Ascending aorta (tissue), 2 donors: ENCODE measurements at regions of chr19 and their contacts with region 1.

Region 1: GRCh38 chr19:17245244-17245984 is at the start of gene NR2F6:
- DNase-seq: no peak
- H3K4me3 ChIP-seq: peak within 1 kb of the TSS; percentile 90 to 97
- H3K27ac ChIP-seq: peak within 1 kb of the TSS; percentile 82 to 85
- H3K4me1 ChIP-seq: peaks cover 3 to 32% of the 10 kb centered on the region in 2 donors
- H3K27me3 ChIP-seq: no peaks in the 10 kb centered on the region
- CTCF ChIP-seq: no peak
- total RNA-seq, gene NR2F6: 181 TPM

Region 2: GRCh38 chr19:17075035-17075863 is 170.2 kb before region 1 on chr19 and contains the starts of genes HAUS8 and MYO9B:
- intact Hi-C with region 1: loop called (anchors 2 kb)
- DNase-seq: peak; percentile 96 to 100
- H3K4me3 ChIP-seq: peak within 1 kb of the TSS; percentile 91 to 97
- H3K27ac ChIP-seq: peak within 1 kb of the TSS; percentile 94 to 98
- H3K4me1 ChIP-seq: peaks cover 5 to 29% of the 10 kb centered on the region in 2 donors
- H3K27me3 ChIP-seq: no peaks in the 10 kb centered on the region
- CTCF ChIP-seq: no peak
- total RNA-seq, gene HAUS8: 4.3 TPM
- total RNA-seq, gene MYO9B: 182 TPM

Region 3: DNA sequence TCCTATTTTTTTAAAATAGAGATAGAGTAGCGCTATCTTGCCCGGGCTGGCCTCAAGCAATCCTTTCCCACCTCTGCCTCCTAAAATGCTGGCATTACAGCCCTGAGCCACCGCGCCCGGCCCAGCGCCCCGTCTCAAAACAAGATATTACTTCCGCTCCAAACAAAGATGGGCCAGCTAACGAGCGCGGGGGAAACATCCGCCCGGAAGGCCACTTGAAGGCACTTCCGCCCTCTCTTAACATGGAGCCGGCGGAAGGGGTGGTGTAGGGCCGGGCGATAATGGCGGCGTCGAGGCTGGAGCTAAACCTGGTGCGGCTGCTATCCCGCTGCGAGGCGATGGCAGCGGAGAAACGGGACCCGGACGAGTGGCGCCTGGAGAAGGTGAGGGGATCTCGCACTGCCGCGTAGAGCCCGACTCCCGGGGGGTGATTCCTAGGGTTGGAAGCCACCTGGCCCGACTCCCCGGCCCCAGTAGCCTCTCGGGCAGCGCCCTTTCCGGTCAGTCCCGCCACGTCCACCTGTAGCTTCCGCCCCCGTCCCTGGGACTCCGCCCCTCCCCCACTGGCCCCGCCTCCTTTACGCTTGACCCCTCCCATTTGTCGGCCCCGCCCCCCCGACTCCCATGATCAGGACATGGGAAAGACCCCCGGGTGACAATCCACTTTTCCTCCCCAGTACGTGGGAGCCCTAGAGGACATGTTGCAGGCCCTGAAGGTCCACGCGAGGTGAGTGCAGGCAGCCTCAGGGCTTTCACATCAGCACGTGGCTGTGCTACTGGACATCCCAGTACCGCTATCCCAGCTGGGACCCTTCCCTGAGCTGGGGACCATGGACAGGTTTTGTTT is 30.1 kb before region 1 on chr19 and contains the start of gene USE1:
- intact Hi-C with region 1: loop called (anchors 1 kb)
- DNase-seq: peak; percentile 66 to 96
- H3K4me3 ChIP-seq: peak within 1 kb of the TSS; percentile 72 to 74
- H3K27ac ChIP-seq: peak within 1 kb of the TSS; percentile 84 to 88
- H3K4me1 ChIP-seq: peaks cover 0 to 17% of the 10 kb centered on the region in 2 donors
- H3K27me3 ChIP-seq: no peaks in the 10 kb centered on the region
- CTCF ChIP-seq: no peak
- total RNA-seq, gene USE1: 234 TPM

Region 4: GRCh38 chr19:17226002-17226933 is 19.1 kb before region 1 on chr19 and contains the start of gene OCEL1:
- intact Hi-C with region 1: loop called (anchors 1 kb)
- DNase-seq: peak; percentile 90 to 99
- H3K4me3 ChIP-seq: peak within 1 kb of the TSS; percentile 73 to 80
- H3K27ac ChIP-seq: peak within 1 kb of the TSS; percentile 88 to 92
- H3K4me1 ChIP-seq: peaks cover 0 to 8% of the 10 kb centered on the region in 2 donors
- H3K27me3 ChIP-seq: no peaks in the 10 kb centered on the region
- CTCF ChIP-seq: no peak
- total RNA-seq, gene OCEL1: 13.7 TPM

Region 5: GRCh38 chr19:17266975-17267788 is 21.8 kb after region 1 on chr19 and contains the start of gene BABAM1:
- intact Hi-C with region 1: loop called (anchors 1 kb)
- DNase-seq: peak; percentile 92 to 99
- H3K4me3 ChIP-seq: peak within 1 kb of the TSS; percentile 79 to 96
- H3K27ac ChIP-seq: peak within 1 kb of the TSS; percentile 61 to 83
- H3K4me1 ChIP-seq: peaks cover 5 to 6% of the 10 kb centered on the region in 2 donors
- H3K27me3 ChIP-seq: no peaks in the 10 kb centered on the region
- CTCF ChIP-seq: no peak
- total RNA-seq, gene BABAM1: 85.5 TPM

Region 6: DNA sequence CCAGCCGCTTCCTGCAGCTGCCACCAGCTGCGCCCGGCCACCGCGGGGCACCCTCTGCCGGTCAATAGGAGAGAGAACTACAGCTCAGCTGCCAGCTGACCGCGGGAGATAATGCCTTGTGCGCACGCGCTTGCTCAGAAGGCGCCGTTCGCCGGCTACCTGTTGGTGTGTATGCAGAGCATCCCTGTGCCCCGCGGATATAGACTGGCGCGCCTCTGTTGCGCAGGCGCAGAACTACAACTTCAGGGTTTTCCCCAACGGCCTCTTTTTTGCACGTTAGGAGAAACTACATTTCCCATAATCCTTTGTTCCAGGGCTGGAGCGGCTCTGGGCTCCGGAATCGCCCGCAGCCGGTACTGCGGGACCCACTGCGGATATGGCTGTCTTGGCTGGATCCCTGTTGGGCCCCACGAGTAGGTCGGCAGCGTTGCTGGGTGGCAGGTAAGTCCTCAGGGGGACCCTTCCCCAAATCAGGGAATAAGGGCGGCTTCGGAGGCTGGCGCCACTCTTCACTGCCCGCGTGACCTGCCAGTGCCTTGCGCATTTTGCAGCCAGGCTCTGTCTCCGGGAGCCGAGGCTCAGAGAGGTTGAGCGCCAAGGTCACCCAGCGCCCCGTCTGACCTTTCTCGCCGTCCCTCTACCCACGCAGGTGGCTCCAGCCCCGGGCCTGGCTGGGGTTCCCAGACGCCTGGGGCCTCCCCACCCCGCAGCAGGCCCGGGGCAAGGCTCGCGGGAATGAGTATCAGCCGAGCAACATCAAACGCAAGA is 60.3 kb after region 1 on chr19 and contains the start of gene MRPL34:
- intact Hi-C with region 1: loop called (anchors 5 kb)
- DNase-seq: peak; percentile 89 to 97
- H3K4me3 ChIP-seq: peak within 1 kb of the TSS; percentile 66 to 72
- H3K27ac ChIP-seq: peak within 1 kb of the TSS; percentile 81 to 90
- H3K4me1 ChIP-seq: peaks cover 2 to 30% of the 10 kb centered on the region in 2 donors
- H3K27me3 ChIP-seq: no peaks in the 10 kb centered on the region
- CTCF ChIP-seq: peak; percentile 79 to 91 (median 81)
- total RNA-seq, gene MRPL34: 98.9 TPM